ENCODE measurements at regions of chr5 and their contacts with region 1.

Region 1: DNA sequence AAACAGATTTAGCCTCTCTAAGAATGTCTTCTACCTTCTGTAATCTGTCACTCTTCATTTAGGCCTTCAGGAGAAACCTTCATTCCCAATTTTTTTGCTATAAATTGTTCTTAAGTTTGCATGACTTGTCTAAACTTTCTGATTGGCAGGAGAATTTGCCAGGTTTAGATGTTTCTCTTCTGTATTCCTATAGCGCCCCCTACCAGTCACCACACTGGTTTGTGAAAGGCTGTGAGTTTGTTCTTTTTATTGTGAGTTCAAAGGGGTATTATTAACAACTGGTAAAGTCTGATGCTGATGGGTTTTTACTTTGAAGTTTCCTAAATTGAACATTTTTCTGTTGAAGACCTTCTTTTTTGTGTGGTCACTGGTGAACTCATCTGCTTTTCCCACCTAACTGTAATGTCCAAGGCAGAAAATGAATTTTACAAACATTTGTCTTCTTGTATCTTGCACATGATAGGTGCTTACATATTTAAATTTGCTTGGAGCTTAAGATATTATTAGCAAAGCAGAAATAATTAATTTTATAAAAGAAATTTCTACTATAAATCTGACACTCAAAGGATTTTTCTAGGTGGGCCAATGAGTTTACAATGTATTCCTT is 18.4 kb upstream of the F2RL2 start:
- DNase-seq: peak; percentile 74
- ATAC-seq: no peak
- H3K4me3 Mint-ChIP-seq: no peak overlapping the region
- H3K27ac Mint-ChIP-seq: no peak overlapping the region
- H3K4me1 Mint-ChIP-seq: peaks cover 5% of the 10 kb centered on the region
- H3K27me3 Mint-ChIP-seq: no peaks in the 10 kb centered on the region

Region 2: GRCh38 chr5:76074487-76075065 is 567.0 kb before region 1 on chr5:
- CTCF ChIA-PET with region 1: no interaction called
- POLR2A ChIA-PET with region 1: no interaction called
- intact Hi-C with region 1: loop called in 1 of 2 experiments (anchors 10 kb)
- DNase-seq: peak; percentile 50
- ATAC-seq: peak; percentile 72
- H3K4me3 Mint-ChIP-seq: no peak overlapping the region
- H3K27ac Mint-ChIP-seq: no peak overlapping the region
- H3K4me1 Mint-ChIP-seq: no peaks in the 10 kb centered on the region
- H3K27me3 Mint-ChIP-seq: peaks cover 50% of the 10 kb centered on the region

Region 3: GRCh38 chr5:76337953-76338451 is 303.6 kb before region 1 on chr5:
- CTCF ChIA-PET with region 1: no interaction called
- POLR2A ChIA-PET with region 1: no interaction called
- intact Hi-C with region 1: loop called (anchors 2 to 5 kb)
- DNase-seq: peak; percentile 47
- ATAC-seq: peak; percentile 80
- H3K4me3 Mint-ChIP-seq: no peak overlapping the region
- H3K27ac Mint-ChIP-seq: no peak overlapping the region
- H3K4me1 Mint-ChIP-seq: peaks cover 25% of the 10 kb centered on the region
- H3K27me3 Mint-ChIP-seq: no peaks in the 10 kb centered on the region

Region 4: DNA sequence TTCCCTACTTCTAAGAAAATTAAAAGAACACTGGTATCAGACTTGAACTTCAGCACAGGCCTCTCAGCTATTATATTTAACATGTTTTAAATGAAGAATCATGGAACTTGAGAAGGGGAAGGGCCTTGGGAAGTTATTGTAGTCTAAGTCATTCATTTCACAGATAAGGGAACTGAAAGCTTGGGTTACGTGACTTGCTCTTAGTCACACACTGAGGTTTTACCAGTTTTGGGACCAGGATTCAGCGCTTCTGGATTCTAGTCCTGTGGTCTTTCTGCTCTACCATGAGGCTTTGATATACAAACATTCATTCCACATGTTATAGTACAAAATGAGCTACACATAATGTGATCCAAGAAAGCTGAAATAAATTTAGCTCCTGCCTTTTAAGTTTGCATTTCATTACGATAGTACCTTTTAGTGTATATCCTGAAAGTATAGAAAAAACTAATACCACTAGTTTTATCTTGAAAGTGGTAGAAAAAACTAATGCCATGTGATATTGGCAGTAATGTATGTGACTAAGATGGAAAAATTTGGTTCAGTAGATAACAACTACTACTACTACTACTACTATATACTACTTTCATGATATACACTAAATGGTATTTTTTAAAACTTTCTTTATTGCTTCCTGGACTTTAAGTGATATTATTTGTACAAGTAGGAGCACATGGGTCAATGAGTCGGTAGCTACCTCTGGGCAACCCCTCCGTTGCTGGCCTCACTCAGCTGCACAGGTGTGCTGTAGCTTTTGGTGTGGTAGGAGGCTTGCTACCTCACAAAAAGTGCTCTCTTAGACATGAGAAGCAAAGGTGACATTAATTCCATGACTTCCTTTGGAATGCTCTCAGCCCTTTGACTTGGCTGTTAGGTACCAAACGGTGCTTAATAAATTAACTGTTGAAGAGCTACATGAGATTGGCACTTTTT is 59.1 kb before region 1 on chr5:
- CTCF ChIA-PET with region 1: interaction called, 10 read pairs
- POLR2A ChIA-PET with region 1: no interaction called
- intact Hi-C with region 1: no loop called
- DNase-seq: peak; percentile 52
- ATAC-seq: peak; percentile 93
- H3K4me3 Mint-ChIP-seq: no peak overlapping the region
- H3K27ac Mint-ChIP-seq: peak overlapping the region; percentile 60
- H3K4me1 Mint-ChIP-seq: peaks cover 20% of the 10 kb centered on the region
- H3K27me3 Mint-ChIP-seq: no peaks in the 10 kb centered on the region

Region 5: DNA sequence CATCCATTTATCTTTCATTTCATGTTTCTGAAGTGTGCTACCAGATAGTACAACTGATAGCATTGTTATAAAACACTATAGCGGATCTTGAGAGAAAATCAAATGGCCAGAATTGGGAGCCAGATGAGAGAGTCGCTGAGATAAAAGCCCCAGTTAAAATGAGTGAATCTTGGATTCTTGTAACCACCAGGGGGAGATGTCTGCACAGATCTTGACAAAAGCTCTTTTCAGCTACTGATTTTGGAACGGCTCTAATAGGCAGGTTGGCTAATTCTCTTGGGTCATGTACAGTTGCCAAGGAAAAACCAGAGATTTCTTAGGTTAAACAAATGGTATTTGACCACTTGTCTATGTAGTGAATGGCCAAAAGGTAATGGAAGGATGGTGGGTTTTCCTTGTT is 40.1 kb before region 1 on chr5:
- CTCF ChIA-PET with region 1: interaction called, 11 read pairs
- POLR2A ChIA-PET with region 1: no interaction called
- intact Hi-C with region 1: loop called (anchors 1 kb)
- DNase-seq: peak; percentile 18
- ATAC-seq: no peak
- H3K4me3 Mint-ChIP-seq: no peak overlapping the region
- H3K27ac Mint-ChIP-seq: no peak overlapping the region
- H3K4me1 Mint-ChIP-seq: peaks cover 9% of the 10 kb centered on the region
- H3K27me3 Mint-ChIP-seq: no peaks in the 10 kb centered on the region

Measured in activated CD4-positive, alpha-beta T cell treated with anti-CD3 and anti-CD28 coated beads for 36 hours (primary cell).